ENCODE measurements at regions of chr13 and their contacts with region 1.

Region 1: DNA sequence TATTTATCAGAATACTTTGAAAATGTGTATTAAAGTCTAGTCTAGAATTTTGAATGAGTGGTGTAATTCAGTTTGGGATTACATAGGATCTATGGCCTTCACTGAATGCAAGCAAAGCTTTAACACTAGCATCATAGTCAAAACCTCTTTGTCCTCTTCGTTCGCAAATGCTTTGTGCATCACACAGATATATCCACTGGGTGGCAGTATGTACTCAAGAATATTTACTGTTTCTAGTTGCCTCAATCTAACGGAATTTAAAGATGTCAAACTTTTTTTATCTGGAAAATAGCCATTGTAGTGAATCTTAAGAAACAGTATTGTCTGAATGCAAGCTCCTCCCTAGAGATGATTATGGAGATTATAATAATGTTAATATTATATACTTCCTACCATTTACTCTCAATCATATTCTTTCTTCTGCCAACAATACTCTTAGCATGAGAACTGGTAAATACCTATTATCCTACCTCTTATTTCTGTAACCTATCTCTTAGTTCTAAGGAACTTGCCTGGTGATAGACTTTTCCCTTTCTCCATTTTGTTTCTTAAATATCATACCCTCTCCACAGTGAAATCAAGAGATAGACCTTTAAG is 25.8 kb downstream of the LACC1 start:
- DNase-seq: no peak
- ATAC-seq: peak; percentile 77

Region 2: DNA sequence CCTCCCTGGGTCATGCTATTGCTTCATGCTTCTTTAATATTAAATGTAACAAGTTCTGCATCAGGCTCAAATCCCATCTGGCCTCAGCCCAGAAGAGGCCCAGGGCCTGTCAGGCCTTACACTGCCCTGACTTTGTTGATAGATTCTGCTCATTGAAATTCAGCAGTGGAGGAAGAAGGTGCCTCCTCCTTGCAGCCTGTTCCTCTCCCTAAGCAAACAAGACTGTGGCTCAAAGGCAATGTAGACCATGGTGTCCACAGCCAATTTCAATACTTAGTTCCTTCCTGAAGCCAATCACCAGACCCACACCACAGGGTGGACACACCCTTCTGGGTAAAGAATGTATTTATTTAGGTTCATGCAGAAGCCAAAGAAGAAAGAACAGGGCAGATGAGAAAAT is 33.6 kb after region 1 on chr13:
- intact Hi-C with region 1: no loop called
- DNase-seq: peak in 1 of 2 donors; percentile 3
- ATAC-seq: peak; percentile 100

Region 3: GRCh38 chr13:43963726-43964125 is 58.2 kb after region 1 on chr13:
- intact Hi-C with region 1: no loop called
- DNase-seq: no peak
- ATAC-seq: no peak

Region 4: DNA sequence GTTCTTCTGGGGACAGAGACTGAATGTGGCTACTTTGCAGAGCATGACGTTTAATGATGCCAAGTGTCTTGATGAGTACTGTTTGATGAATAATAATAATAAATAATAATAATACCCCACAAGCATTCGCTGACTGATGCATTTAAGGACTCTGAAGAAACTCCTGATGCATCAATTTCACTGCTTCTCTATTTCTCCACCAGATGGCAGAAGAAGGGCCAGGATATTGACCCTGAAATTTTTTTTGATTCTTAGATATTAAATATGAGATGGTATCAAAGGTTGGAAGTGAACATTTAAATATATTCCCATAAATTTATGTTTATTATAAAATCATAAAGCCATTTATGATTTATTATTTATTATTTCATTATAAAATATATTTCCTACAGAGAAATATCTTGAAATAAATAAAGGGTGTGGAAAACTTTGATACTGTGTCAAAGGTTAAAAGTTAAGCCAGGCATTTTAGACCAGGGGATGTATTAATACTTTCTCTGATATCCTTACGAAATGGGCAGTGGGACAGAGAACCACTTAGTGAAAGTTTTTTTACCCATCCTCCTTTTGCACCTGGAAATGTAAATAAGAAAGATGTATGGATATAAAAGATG is 145.0 kb after region 1 on chr13:
- intact Hi-C with region 1: loop called in 1 of 2 experiments (anchors 10 kb)
- DNase-seq: no peak
- ATAC-seq: peak; percentile 51

Region 5: GRCh38 chr13:44435142-44435982 is 529.8 kb after region 1 on chr13:
- intact Hi-C with region 1: loop called in 1 of 2 experiments (anchors 5 kb)
- DNase-seq: peak; percentile 97 to 98
- ATAC-seq: peak; percentile 75

Region 6: GRCh38 chr13:44470638-44471562 is 565.4 kb after region 1 on chr13:
- intact Hi-C with region 1: loop called in 1 of 2 experiments (anchors 5 kb)
- DNase-seq: no peak
- ATAC-seq: no peak

Region 7: DNA sequence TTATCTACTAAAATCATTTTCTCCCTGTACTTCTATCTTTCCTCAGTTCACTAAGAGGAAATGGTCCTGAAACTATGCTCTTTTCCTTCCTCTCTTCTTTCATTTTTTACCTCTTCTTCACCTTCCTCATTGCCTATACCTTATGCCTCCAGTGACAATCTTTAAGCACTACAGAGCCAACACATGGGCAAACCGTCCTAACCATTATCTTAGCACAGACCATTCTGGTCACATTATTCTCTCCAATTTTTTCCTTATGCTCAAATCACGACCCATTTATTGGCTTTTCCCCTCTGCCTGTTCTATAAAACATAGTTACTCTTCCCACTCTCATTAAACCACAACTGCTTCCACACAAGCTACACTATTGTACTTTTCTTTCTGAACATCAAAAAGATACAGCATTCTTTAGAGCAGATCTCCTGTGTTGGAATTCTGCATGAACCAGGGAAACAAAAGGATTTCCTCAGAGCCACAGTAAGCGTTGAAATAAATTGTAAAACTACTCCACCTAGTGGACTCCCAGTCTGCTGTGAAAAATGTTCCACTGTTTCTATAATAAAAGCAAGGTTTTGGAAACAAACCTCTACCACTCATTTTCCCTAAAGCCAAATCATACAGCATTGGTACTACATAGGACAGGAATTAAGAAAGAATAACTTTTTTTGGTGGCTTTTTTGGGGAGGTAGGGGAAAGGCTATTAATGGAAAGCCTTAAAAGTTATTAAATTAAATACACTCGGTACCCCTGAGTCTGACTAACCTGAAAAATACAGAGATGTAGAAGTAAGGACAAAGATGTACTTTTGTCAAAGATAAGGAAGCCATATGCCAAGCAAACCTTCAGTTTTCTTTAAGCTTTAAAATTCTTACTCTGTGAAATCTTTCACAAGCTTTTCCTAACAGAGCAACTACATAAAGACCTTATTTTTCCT is 1064.3 kb after region 1 on chr13:
- intact Hi-C with region 1: loop called in 1 of 2 experiments (anchors 10 kb)
- DNase-seq: no peak
- ATAC-seq: peak; percentile 69